ENCODE measurements at regions of chr1 and their contacts with region 1.

Region 1: GRCh38 chr1:244414543-244414942 is 37.2 kb downstream of the ADSS2 start:
- DNase-seq: peak; percentile 50
- ATAC-seq: peak; percentile 58
- H3K4me3 ChIP-seq: no peak overlapping the region
- H3K27ac ChIP-seq: no peak overlapping the region
- H3K4me1 ChIP-seq: peaks cover 16% of the 10 kb centered on the region
- H3K27me3 ChIP-seq: no peaks in the 10 kb centered on the region
- CTCF ChIP-seq: peak; percentile 50

Region 2: GRCh38 chr1:244280859-244281258 is 133.7 kb before region 1 on chr1:
- CTCF ChIA-PET with region 1: no interaction called
- POLR2A ChIA-PET with region 1: no interaction called
- intact Hi-C with region 1: no loop called
- DNase-seq: peak; percentile 78
- ATAC-seq: peak; percentile 87
- H3K4me3 ChIP-seq: no peak overlapping the region
- H3K27ac ChIP-seq: no peak overlapping the region
- H3K4me1 ChIP-seq: peaks cover 14% of the 10 kb centered on the region
- H3K27me3 ChIP-seq: no peaks in the 10 kb centered on the region
- CTCF ChIP-seq: no peak

Region 3: DNA sequence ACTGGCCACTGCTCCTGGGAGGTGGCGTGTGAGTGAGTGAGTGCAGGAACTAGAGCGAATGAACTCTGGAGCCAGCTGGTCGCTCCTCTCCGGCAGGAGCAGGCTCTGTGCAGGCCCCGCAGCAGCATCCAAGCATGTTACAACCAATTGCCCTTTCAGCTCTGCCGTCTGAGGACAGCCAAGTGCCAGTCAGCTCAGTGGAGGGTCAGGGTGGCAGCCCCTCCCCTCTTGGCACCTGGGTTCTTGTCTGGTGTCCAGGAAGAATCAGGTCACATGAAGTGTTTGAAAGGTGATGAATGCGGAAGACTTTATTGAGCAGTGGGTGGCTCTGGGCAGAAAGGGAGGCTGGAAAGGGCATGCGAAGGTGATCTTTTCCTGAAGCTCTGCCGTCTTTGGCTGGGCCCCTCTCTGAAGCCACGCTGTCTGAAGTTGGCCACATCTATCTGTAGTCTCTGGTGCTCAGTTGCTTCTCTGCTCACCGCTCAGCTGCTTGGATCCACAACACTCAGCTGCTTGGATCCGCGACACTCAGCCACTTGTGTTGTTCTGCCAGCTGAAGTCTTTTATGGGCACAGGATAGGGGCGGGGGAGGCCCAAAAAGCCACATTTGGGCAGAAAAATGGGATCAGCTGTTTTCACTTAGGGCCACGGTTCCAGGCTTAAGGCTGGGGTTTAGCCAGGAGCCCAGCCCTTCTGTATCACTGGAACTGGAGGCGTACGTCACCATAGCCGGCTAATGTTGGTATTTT is 102.6 kb before region 1 on chr1:
- CTCF ChIA-PET with region 1: no interaction called
- POLR2A ChIA-PET with region 1: no interaction called
- intact Hi-C with region 1: no loop called
- DNase-seq: no peak
- ATAC-seq: no peak
- H3K4me3 ChIP-seq: no peak overlapping the region
- H3K27ac ChIP-seq: no peak overlapping the region
- H3K4me1 ChIP-seq: no peaks in the 10 kb centered on the region
- H3K27me3 ChIP-seq: no peaks in the 10 kb centered on the region
- CTCF ChIP-seq: no peak

Region 4: GRCh38 chr1:244371242-244372141 is 43.1 kb before region 1 on chr1:
- CTCF ChIA-PET with region 1: no interaction called
- POLR2A ChIA-PET with region 1: no interaction called
- intact Hi-C with region 1: no loop called
- DNase-seq: no peak
- ATAC-seq: no peak; the same call in 1 of the 2 replicates
- H3K4me3 ChIP-seq: no peak overlapping the region
- H3K27ac ChIP-seq: no peak overlapping the region
- H3K4me1 ChIP-seq: no peaks in the 10 kb centered on the region
- H3K27me3 ChIP-seq: no peaks in the 10 kb centered on the region
- CTCF ChIP-seq: no peak

Region 5: DNA sequence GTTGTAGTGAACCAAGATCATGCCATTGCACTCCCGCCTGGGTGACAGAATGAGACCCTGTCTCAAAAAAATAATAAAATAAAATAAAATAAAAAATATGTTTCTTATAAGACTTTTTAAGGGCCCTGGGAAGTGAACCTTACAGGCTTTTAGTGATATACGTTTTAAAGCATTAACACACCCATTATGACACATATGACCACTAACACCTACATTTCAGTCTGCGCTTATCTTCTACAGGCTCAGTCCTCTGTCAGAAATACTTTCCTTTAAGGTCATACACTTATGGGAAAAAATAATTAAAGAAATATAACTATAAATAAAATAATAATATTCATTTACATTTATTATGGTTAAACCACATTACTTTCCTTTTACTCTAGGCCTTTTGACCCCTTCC is 15.3 kb after region 1 on chr1:
- CTCF ChIA-PET with region 1: no interaction called
- POLR2A ChIA-PET with region 1: interaction called, 4 read pairs
- intact Hi-C with region 1: loop called (anchors 1 kb)
- DNase-seq: no peak
- ATAC-seq: no peak
- H3K4me3 ChIP-seq: no peak overlapping the region
- H3K27ac ChIP-seq: no peak overlapping the region
- H3K4me1 ChIP-seq: no peaks in the 10 kb centered on the region
- H3K27me3 ChIP-seq: no peaks in the 10 kb centered on the region
- CTCF ChIP-seq: no peak

Measured in PC-3 (cell line).